HCT116 (cell line): ENCODE measurements at regions of chr16 and their contacts with region 1.

Region 1: GRCh38 chr16:53022374-53022773 is 30.3 kb downstream of the CHD9NB start:
- DNase-seq: peak; percentile 41
- ATAC-seq: peak; percentile 97
- H3K4me3 ChIP-seq: no peak overlapping the region
- H3K27ac ChIP-seq: no peak overlapping the region
- H3K4me1 ChIP-seq: no peaks in the 10 kb centered on the region
- H3K27me3 ChIP-seq: no peaks in the 10 kb centered on the region
- CTCF ChIP-seq: peak; percentile 45 to 68 (median 47); a peak in 4 of 6 replicates
- POLR2A ChIP-seq: no peak
- RAD21 ChIP-seq: peak; percentile 79

Region 2: DNA sequence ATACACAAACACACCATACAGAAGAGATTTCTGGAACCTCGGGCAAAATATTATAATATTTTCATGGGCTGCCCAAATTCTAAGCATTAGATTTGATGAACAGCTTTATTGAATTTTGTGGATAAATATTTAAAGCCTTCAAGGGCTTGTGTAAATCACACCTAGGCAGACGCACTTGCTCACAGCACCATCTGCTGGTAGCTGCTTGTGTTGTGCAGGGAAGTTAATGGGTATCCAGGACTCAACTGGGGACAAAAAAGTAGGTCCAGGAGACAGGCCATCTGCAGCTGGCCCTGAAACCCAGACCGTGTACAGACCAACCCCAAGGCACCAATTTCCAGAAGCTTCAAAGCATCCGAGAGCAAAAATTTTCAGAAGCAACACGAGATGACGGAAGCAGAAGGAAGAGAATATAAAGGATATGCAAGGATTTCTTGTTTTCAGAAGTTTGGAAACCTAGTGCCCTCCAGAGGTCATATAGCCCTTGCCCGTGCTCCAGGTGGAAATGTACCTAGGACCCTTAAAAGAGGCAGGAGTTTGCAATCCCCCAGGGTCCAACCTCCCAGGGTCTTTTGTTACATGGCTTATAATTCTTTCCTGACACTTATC is 109.7 kb before region 1 on chr16:
- CTCF ChIA-PET with region 1: no interaction called
- POLR2A ChIA-PET with region 1: no interaction called
- RAD21 ChIA-PET with region 1: no interaction called
- intact Hi-C with region 1: loop called (anchors 1 kb)
- DNase-seq: peak; percentile 55
- ATAC-seq: peak; percentile 94
- H3K4me3 ChIP-seq: no peak overlapping the region
- H3K27ac ChIP-seq: no peak overlapping the region
- H3K4me1 ChIP-seq: no peaks in the 10 kb centered on the region
- H3K27me3 ChIP-seq: 0 out of 2 replicates have a peak, but pooled peaks cover under 1% of the 10 kb centered on the region
- CTCF ChIP-seq: peak; percentile 52 to 83 (median 81); a peak in 4 of 6 replicates
- POLR2A ChIP-seq: no peak
- RAD21 ChIP-seq: peak; percentile 75